ENCODE measurements at regions of chr11 and their contacts with region 1.

Region 1: DNA sequence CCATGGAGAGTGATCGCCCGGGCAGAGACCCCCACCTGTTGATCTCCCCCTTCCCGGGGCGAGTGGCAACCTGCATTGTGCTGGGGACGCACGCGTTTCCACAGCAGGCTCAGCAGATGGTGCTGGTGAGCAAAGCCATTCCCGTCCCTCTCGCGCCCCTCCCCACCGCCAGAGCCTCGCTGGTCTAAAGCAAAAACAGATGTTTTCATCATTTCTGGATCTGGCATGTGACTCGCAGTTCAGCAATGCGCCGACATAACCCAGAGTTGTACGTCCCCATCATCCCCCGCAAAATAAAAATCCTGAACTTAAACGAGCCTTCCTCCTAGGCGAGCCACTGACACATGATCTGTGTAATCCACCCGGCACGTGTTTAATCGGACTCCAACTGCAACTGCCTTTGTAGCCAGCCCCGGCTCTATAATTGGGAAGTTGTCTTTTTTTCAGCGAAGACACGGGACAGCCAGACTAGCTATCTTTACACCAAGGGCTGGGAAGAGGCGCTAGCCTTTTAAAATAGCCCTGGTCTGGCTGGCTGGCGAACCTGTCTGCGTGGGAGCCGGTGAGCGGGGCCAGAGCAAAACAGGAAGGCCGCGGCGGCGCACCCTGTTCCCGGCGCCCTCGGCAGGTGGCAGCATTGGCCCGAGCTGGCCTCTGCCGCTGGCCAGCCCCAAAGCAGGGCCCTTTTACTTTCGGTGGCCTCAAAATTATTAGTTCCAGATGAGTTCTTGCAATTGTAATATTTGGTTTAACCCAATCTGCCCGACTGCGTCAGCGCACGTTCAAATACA is 203.0 kb upstream of the SORL1-AS1 start:
- DNase-seq: peak; percentile 82 to 92 (median 90)
- H3K4me3 ChIP-seq: peak overlapping the region; percentile 39 to 80 (median 61)
- H3K27ac ChIP-seq: peak overlapping the region; percentile 85 to 99 (median 97)
- H3K27me3 ChIP-seq: no peaks in the 10 kb centered on the region
- CTCF ChIP-seq: peak; percentile 69 to 95 (median 82)

Region 2: GRCh38 chr11:121722431-121723245 is 66.9 kb after region 1 on chr11:
- intact Hi-C with region 1: loop called (anchors 1 kb)
- DNase-seq: peak; percentile 37 to 96 (median 93)
- H3K4me3 ChIP-seq: peak overlapping the region; percentile 46 to 94 (median 66)
- H3K27ac ChIP-seq: peak overlapping the region; percentile 86 to 100 (median 99)
- H3K27me3 ChIP-seq: no peaks in the 10 kb centered on the region
- CTCF ChIP-seq: peak in 19 of 56 donors; percentile 6 to 42 (median 10)

Region 3: DNA sequence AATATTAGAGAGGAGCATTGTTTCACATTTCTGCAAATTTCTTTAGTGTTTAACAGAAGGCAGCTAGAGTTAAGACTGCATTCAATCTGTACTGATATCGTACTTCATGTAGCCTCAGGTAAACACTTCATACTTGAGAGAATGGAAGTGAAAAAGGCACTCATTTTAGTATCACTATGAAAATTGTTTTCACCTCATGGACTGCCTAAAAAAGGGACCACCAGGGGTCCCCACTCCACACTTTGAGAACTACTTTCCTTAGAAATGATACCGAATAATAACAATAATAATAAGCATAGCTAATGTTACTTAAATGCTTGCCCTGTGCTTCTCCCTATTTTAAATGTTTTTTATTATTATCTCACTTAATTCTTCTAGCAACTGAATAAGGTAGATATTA is 365.2 kb after region 1 on chr11:
- intact Hi-C with region 1: loop called (anchors 5 kb)
- DNase-seq: no peak
- H3K4me3 ChIP-seq: no peak overlapping the region
- H3K27ac ChIP-seq: no peak overlapping the region
- H3K27me3 ChIP-seq: no peaks in the 10 kb centered on the region
- CTCF ChIP-seq: peak in 55 of 56 donors; percentile 29 to 70 (median 54)

Region 4: DNA sequence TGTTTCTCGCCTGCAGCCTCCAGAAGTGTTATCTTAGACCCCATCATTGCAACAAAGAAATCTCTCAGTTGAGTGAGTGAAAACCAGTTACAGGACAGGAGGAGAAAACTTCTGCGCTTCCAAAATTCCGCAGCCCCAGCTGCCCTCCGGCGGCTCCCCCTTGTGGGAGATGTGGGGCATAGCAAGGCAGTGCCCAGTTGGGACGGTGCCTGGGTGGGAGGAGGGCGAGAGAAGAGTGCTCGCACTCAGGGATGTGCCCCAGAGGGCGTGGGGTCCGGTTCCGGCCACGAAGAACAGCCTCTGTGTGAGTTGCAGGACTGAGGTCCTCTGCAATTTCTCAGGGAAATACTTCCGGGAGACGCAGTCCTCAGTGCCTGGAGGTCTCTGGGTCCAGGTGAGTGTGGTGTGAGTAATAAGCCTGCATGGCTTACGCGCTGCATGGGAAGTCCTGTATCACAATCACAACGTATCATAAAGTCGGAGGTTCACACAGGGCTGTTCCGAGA is 547.3 kb after region 1 on chr11:
- intact Hi-C with region 1: loop called (anchors 2 to 5 kb)
- DNase-seq: peak; percentile 26 to 83 (median 65)
- H3K4me3 ChIP-seq: peak overlapping the region; percentile 29 to 82 (median 61)
- H3K27ac ChIP-seq: peak overlapping the region in 58 of 59 donors; percentile 34 to 99 (median 88)
- H3K27me3 ChIP-seq: no peaks in the 10 kb centered on the region
- CTCF ChIP-seq: peak; percentile 87 to 100 (median 98)

Region 5: GRCh38 chr11:122439911-122440810 is 784.4 kb after region 1 on chr11:
- intact Hi-C with region 1: loop called in 1 of 2 experiments (anchors 5 kb)
- DNase-seq: peak in 4 of 10 donors; percentile 21 to 47 (median 23)
- H3K4me3 ChIP-seq: peak overlapping the region; percentile 44 to 82 (median 63)
- H3K27ac ChIP-seq: peak overlapping the region; percentile 30 to 97 (median 89)
- H3K27me3 ChIP-seq: no peaks in the 10 kb centered on the region
- CTCF ChIP-seq: peak in 1 of 56 donors; percentile 7

Region 6: DNA sequence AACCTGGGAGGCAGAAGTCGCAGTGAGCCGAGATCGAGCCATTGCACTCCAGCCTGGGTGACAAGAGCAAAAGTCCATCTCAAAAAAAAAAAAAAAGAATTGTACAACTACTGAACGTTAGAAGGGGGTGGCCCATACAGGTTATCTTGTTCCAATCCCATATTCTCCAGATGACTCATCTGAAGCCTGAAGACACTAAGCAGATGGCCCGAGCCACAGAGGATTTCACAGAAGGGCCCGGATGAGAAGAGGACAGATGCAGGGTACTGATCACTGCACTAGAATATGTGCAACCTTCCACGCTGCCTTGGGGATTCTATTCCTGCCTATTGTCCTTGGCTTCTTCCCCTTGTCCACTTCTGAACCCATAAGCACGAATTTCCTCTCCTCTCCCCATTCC is 928.9 kb after region 1 on chr11:
- intact Hi-C with region 1: loop called in 1 of 2 experiments (anchors 10 kb)
- DNase-seq: no peak
- H3K4me3 ChIP-seq: no peak overlapping the region
- H3K27ac ChIP-seq: no peak overlapping the region
- H3K27me3 ChIP-seq: no peaks in the 10 kb centered on the region
- CTCF ChIP-seq: no peak